Motor neuron (in vitro differentiated cells): ENCODE measurements at regions of chr21 and their contacts with region 1.

Region 1: DNA sequence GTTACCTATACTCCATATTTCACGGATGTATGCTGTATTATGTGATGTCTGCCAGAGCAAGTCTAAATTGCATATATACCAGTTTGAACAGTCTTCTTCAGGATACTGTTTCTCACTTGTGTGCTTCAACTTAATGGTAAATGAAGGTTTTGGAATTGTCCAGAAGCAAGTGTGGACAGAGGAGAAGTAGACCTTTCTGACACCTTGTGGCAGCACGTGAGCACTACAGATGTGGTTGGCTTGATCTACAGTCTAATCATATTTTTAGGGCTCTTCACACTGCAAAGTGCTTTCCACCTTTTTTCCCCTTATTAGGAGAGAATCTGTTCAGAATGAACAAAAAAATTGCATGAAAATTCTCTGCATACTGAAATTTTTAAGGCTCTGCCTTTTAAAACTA is 10.9 kb downstream of the MORC3 start:
- ATAC-seq: peak in 4 of 8 experiments; percentile 36 to 72 (median 66)
- H3K4me3 ChIP-seq: no peak overlapping the region
- H3K27ac ChIP-seq: no peak overlapping the region
- H3K4me1 ChIP-seq: no peaks in the 10 kb centered on the region

Region 2: DNA sequence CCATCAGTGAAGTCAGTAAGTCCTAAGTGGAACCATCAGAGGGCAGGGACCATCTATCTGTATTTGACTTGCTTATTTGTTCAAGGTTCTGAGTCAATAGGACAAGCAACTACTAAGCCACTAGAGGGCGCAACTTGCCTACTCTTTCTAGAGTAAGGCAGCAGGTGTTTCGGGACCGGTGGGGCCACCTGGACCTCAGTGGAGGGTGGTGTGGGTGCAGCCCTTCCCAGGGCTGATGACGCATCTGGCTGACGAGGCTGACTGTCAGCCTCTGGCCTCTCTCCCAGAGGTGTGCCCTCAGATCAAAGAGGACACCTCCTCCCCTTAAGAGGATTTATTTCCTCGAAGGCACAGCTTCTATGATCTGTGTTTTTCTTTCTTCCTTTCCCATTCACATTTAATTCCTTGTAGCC is 189.4 kb before region 1 on chr21:
- in situ Hi-C with region 1: loop called in 2 of 9 experiments (anchors 25 kb)
- ATAC-seq: peak; percentile 93 to 98 (median 95)
- H3K4me3 ChIP-seq: no peak overlapping the region
- H3K27ac ChIP-seq: no peak overlapping the region
- H3K4me1 ChIP-seq: peaks cover 0 to 3% of the 10 kb centered on the region in 2 donors

Region 3: GRCh38 chr21:36156339-36156814 is 174.5 kb before region 1 on chr21:
- in situ Hi-C with region 1: loop called in 1 of 9 experiments (anchors 25 kb)
- ATAC-seq: peak; percentile 82 to 89 (median 86)
- H3K4me3 ChIP-seq: peak overlapping the region; percentile 74 to 82 (median 79)
- H3K27ac ChIP-seq: peak overlapping the region in 1 of 2 donors; percentile 65
- H3K4me1 ChIP-seq: peaks cover 0 to 6% of the 10 kb centered on the region in 2 donors